Ascending aorta (tissue), 2 donors: ENCODE measurements at regions of chr7 and their contacts with region 1.

Region 1: GRCh38 chr7:149714050-149714909 is 59.1 kb downstream of the ZNF467 start:
- DNase-seq: peak; percentile 47 to 93
- H3K4me3 ChIP-seq: peak overlapping the region; percentile 69 to 86
- H3K27ac ChIP-seq: peak overlapping the region; percentile 29 to 83
- H3K4me1 ChIP-seq: peaks cover 3 to 20% of the 10 kb centered on the region in 2 donors
- H3K27me3 ChIP-seq: no peaks in the 10 kb centered on the region
- CTCF ChIP-seq: no peak

Region 2: GRCh38 chr7:148620749-148621359 is 1093.4 kb before region 1 on chr7:
- intact Hi-C with region 1: no loop called
- DNase-seq: no peak
- H3K4me3 ChIP-seq: no peak overlapping the region
- H3K27ac ChIP-seq: no peak overlapping the region
- H3K4me1 ChIP-seq: no peaks in the 10 kb centered on the region
- H3K27me3 ChIP-seq: no peaks in the 10 kb centered on the region
- CTCF ChIP-seq: no peak

Region 3: DNA sequence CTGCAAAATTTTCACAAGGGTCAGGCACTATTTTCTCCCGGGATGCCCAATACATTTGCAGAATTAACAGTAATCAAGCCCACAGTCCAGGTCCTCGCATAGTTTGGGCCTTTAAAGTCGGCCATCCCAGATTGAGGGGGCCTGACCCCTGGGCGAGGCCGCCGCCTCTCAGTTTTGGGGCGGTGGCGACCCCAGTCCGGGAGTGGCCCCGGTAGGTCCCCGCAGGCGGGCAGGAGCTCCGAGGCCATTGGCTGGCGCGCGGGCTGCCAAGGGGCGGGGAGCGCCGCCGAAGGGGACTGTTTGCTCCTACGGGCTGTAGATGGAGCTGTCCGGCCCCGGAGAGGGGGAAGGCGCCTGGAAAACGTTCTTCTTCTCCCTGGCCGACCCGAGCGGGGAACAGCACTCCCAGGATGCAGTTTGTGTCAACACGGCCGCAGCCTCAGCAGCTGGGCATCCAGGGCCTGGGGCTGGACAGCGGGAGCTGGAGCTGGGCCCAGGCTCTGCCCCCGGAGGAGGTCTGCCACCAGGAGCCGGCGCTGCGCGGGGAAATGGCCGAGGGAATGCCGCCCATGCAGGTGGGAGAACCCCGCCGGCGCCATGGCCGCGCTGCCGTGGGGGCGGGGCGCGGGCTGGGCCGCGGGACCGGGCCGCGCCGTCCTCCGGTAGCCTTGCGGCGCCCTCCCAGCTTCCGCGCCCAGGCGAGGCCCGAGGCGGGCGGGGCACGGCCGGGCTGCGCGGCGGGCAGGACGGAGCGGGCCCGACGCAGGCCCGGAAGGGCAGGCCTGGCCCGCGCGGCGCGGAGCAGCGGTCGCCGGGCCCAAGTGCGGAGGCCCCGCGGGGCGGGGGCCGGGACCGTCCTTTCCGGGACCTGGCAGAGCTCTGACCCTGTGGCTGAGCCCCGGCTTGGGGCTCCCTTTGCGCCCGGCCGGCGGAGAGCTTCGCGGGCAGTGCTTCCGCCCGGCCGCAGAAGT is 518.8 kb before region 1 on chr7 and contains the start of gene ZNF282:
- intact Hi-C with region 1: loop called (anchors 10 kb)
- DNase-seq: peak; percentile 56 to 96
- H3K4me3 ChIP-seq: peak within 1 kb of the TSS; percentile 79 to 98
- H3K27ac ChIP-seq: peak within 1 kb of the TSS; percentile 80 to 95
- H3K4me1 ChIP-seq: peaks cover 20 to 22% of the 10 kb centered on the region in 2 donors
- H3K27me3 ChIP-seq: no peaks in the 10 kb centered on the region
- CTCF ChIP-seq: peak; percentile 61 to 77 (median 66)
- total RNA-seq, gene ZNF282: 17.9 TPM

Region 4: DNA sequence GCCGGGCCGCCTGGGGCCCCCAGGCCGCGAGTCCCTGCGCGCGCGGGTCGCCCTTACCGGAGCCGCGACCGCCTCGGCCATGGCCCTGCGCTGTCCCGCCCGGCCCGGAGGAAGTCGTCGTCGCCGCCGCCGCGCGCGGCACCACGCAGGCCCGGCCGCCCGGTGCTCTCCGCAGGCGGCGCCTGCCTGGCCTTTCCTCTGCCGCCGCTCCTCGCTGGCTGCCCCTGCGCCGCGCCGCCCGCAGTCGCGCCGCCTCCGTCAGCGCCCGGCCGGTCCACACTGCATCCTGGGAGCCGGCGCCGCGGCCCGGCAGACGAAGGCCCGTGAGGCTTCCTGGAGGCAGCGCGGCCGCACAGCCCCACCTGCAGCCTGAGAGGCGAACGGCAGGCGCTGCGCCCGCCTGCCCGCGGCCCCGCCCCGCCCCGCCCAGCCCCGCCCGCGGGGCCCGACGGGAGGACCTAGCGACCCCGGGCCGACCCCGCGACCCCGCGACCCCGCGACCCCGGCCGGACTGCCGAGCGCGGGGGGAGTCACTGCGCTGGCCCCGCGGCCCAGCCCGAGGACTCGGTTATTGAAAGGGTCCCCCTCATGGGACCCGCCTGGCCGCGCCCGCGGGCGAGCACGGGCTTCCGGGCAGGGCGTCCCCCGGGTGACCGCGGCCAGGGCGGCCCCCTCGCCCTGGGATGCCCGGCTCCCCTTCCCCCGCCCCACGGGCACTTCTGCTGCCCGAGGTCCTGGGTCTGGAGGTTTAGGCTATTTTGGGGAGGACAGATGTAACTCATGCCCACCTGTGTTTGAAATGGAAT is 216.6 kb before region 1 on chr7 and contains the start of gene ZNF746:
- intact Hi-C with region 1: loop called (anchors 1 kb)
- DNase-seq: peak; percentile 28 to 88
- H3K4me3 ChIP-seq: peak within 1 kb of the TSS; percentile 84 to 92
- H3K27ac ChIP-seq: peak within 1 kb of the TSS; percentile 87 to 89
- H3K4me1 ChIP-seq: peaks cover 6 to 11% of the 10 kb centered on the region in 2 donors
- H3K27me3 ChIP-seq: no peaks in the 10 kb centered on the region
- CTCF ChIP-seq: peak in 2 of 3 experiments; percentile 38 to 77
- total RNA-seq, gene ZNF746: 27.5 TPM

Region 5: DNA sequence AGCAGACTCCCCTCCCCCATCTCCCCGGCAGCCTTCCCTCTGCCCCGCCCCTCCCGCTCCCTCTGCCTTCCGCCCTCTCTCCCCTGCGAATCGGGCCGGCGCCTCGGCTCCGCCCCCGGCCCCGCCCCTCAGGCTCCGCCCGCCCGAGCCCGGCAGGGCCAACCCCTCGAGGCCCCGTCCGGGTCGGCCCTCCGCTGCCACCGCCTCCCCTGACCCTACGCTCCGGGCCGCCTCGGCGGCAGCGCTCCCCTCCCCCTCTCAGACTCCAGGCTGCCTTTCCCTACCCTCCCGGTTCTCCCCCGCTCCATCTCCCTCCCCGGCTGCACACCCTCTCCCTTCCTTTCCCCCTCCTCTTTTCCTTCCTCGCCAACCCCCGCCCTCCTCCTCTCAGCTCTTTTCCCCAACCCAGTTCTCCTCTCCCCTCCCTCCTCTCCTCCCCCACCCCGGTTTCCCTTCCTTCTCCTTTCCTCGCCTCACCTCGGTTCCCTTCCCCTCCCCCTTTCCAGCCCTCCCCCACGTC is 57.5 kb after region 1 on chr7:
- intact Hi-C with region 1: loop called (anchors 1 kb)
- DNase-seq: peak; percentile 68 to 93
- H3K4me3 ChIP-seq: peak overlapping the region; percentile 83 to 87
- H3K27ac ChIP-seq: no peak overlapping the region
- H3K4me1 ChIP-seq: peaks cover 5 to 10% of the 10 kb centered on the region in 2 donors
- H3K27me3 ChIP-seq: no peaks in the 10 kb centered on the region
- CTCF ChIP-seq: no peak

Region 6: GRCh38 chr7:149787428-149788299 is 73.4 kb after region 1 on chr7:
- intact Hi-C with region 1: no loop called
- DNase-seq: no peak
- H3K4me3 ChIP-seq: no peak overlapping the region
- H3K27ac ChIP-seq: no peak overlapping the region
- H3K4me1 ChIP-seq: no peaks in the 10 kb centered on the region
- H3K27me3 ChIP-seq: no peaks in the 10 kb centered on the region
- CTCF ChIP-seq: no peak

Region 7: DNA sequence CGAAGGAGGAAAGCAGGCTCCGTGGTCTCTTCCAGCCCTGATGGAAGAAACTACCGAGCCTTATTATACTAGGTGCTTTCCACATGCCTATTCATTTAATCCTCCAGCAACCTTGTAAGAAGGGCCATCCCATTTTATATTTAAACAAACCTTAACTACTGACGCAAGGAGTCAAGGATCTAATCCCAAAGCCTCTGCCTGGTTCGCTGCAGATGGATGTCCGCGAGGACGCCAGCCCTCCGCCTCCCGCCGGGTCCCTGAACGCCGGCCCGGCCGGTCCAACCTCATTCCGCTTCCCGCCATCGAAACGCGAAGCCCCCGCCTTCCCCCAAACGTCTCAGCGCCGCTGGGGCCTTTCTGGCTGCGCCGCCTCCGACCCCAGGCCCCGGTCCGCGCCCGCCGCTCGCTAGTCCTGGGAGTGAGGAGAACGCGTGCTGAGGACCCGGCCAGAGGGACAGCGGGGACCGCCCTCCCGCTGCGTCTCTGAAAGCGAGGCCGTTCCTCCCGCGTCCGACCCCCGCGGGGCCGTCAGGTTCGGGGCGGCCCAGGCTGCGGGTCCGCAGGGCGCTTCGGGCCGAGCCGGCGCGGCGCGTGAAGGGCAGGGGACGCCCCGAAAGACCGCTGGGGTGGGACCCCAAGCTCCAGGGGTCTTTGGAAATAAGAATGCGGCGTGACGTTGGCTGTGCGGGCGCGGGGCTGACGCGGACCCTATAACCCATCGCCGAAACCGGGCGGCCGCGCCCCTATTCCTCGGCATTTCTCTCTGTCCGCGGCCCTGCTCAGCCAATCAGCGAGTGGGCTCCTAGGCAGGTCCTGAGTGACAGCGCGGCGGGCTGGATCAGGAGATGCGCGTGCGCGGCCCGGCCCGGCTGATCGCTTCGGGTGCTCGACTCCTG is 159.0 kb after region 1 on chr7 and contains the start of gene ATP6V0E2:
- intact Hi-C with region 1: loop called (anchors 10 kb)
- DNase-seq: peak; percentile 81 to 97
- H3K4me3 ChIP-seq: peak within 1 kb of the TSS; percentile 86 to 89
- H3K27ac ChIP-seq: peak within 1 kb of the TSS; percentile 84 to 86
- H3K4me1 ChIP-seq: peaks cover 11% of the 10 kb centered on the region in 2 donors
- H3K27me3 ChIP-seq: no peaks in the 10 kb centered on the region
- CTCF ChIP-seq: no peak
- total RNA-seq, gene ATP6V0E2: 29.5 TPM

Region 8: GRCh38 chr7:151080522-151081169 is 1366.4 kb after region 1 on chr7 and contains the start of gene FASTK:
- intact Hi-C with region 1: loop called (anchors 10 kb)
- DNase-seq: peak; percentile 84 to 95
- H3K4me3 ChIP-seq: peak within 1 kb of the TSS; percentile 75 to 87
- H3K27ac ChIP-seq: peak within 1 kb of the TSS; percentile 95 to 96
- H3K4me1 ChIP-seq: peaks cover 24 to 35% of the 10 kb centered on the region in 2 donors
- H3K27me3 ChIP-seq: no peaks in the 10 kb centered on the region
- CTCF ChIP-seq: no peak
- total RNA-seq, gene FASTK: 121 TPM